Heart left ventricle (tissue), 16 donors: ENCODE measurements at regions of chr7 and their contacts with region 1.

Region 1: DNA sequence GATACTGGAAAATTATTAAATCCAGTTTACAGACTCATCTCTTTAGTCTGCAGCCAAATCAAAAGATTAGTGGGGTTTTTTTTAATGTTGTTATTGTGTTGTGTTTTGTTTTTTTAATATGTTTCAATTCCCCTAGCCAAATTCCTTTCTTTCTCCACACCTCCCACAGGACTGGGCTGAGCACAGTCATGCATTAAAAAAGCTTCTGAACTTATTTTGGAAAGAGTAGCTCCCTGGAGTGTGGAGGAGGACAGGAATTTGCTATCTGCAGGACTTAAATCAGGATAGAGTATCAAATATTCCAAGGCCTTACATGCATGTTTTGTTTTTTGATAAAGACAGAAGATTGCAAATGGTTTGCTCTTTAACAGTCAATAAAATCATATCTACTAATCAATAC is 90.7 kb downstream of the GNAI1 start:
- DNase-seq: no peak
- ATAC-seq: no peak
- H3K4me3 ChIP-seq: no peak overlapping the region
- H3K27ac ChIP-seq: no peak overlapping the region
- H3K4me1 ChIP-seq: peaks cover 0 to 10% (median 0%) of the 10 kb centered on the region in 12 donors
- H3K27me3 ChIP-seq: no peaks in the 10 kb centered on the region
- CTCF ChIP-seq: no peak
- POLR2A ChIP-seq: no peak

Region 2: GRCh38 chr7:80335511-80336231 is 110.3 kb after region 1 on chr7:
- intact Hi-C with region 1: loop called in 1 of 10 experiments (anchors 10 kb)
- DNase-seq: no peak
- ATAC-seq: peak in 2 of 4 donors; percentile 56 to 67
- H3K4me3 ChIP-seq: no peak overlapping the region
- H3K27ac ChIP-seq: peak overlapping the region in 7 of 12 donors; percentile 19 to 49 (median 31)
- H3K4me1 ChIP-seq: peaks cover 0 to 21% (median 7%) of the 10 kb centered on the region in 12 donors
- H3K27me3 ChIP-seq: no peaks in the 10 kb centered on the region
- CTCF ChIP-seq: no peak
- POLR2A ChIP-seq: no peak